ENCODE measurements at regions of chr2 and their contacts with region 1.

Region 1: GRCh38 chr2:231925303-231926179 is 655 bp downstream of the NPPC start:
- DNase-seq: peak; percentile 63 to 70 (median 70)
- H3K4me3 ChIP-seq: peak overlapping the region in 1 of 3 experiments; percentile 65
- H3K4me3 Mint-ChIP-seq: peak overlapping the region; percentile 59 to 82
- H3K27ac ChIP-seq: no peak overlapping the region
- H3K27ac Mint-ChIP-seq: no peak overlapping the region
- H3K4me1 ChIP-seq: peaks cover 16 to 24% of the 10 kb centered on the region in 2 donors
- H3K4me1 Mint-ChIP-seq: peaks cover 12% of the 10 kb centered on the region
- H3K27me3 ChIP-seq: peaks cover 28 to 70% of the 10 kb centered on the region in 2 donors
- H3K27me3 Mint-ChIP-seq: peaks cover 50 to 78% (median 60%) of the 10 kb centered on the region in 3 donors
- CTCF ChIP-seq: peak; percentile 89

Region 2: GRCh38 chr2:230619466-230619865 is 1306.1 kb before region 1 on chr2:
- intact Hi-C with region 1: no loop called
- DNase-seq: no peak
- H3K4me3 ChIP-seq: no peak overlapping the region
- H3K4me3 Mint-ChIP-seq: no peak overlapping the region
- H3K27ac ChIP-seq: no peak overlapping the region
- H3K27ac Mint-ChIP-seq: no peak overlapping the region
- H3K4me1 ChIP-seq: no peaks in the 10 kb centered on the region
- H3K4me1 Mint-ChIP-seq: peaks cover 5% of the 10 kb centered on the region
- H3K27me3 ChIP-seq: no peaks in the 10 kb centered on the region
- H3K27me3 Mint-ChIP-seq: peaks cover 0 to 4% (median 3%) of the 10 kb centered on the region in 3 donors
- CTCF ChIP-seq: no peak

Region 3: GRCh38 chr2:231961349-231962166 is 36.0 kb after region 1 on chr2 and contains the start of gene DIS3L2:
- intact Hi-C with region 1: no loop called
- DNase-seq: peak; percentile 59 to 66 (median 59)
- H3K4me3 ChIP-seq: peak within 1 kb of the TSS; percentile 87 to 95 (median 92)
- H3K4me3 Mint-ChIP-seq: peak within 1 kb of the TSS; percentile 92 to 94
- H3K27ac ChIP-seq: peak within 1 kb of the TSS; percentile 12 to 78
- H3K27ac Mint-ChIP-seq: peak within 1 kb of the TSS in 6 of 7 donors; percentile 79 to 91 (median 84)
- H3K4me1 ChIP-seq: peaks cover 11 to 16% of the 10 kb centered on the region in 2 donors
- H3K4me1 Mint-ChIP-seq: peaks cover 28% of the 10 kb centered on the region
- H3K27me3 ChIP-seq: no peaks in the 10 kb centered on the region
- H3K27me3 Mint-ChIP-seq: peaks cover 2 to 7% (median 5%) of the 10 kb centered on the region in 3 donors
- CTCF ChIP-seq: no peak
- polyA plus RNA-seq, gene DIS3L2: 6.0 to 21.7 (median 6.4) TPM

Region 4: GRCh38 chr2:232133078-232133477 is 207.5 kb after region 1 on chr2:
- intact Hi-C with region 1: loop called in 1 of 2 experiments (anchors 10 kb)
- DNase-seq: no peak
- H3K4me3 ChIP-seq: no peak overlapping the region
- H3K4me3 Mint-ChIP-seq: no peak overlapping the region
- H3K27ac ChIP-seq: no peak overlapping the region
- H3K27ac Mint-ChIP-seq: no peak overlapping the region
- H3K4me1 ChIP-seq: no peaks in the 10 kb centered on the region
- H3K4me1 Mint-ChIP-seq: peaks cover 3% of the 10 kb centered on the region
- H3K27me3 ChIP-seq: no peaks in the 10 kb centered on the region
- H3K27me3 Mint-ChIP-seq: no peaks in the 10 kb centered on the region
- CTCF ChIP-seq: no peak

Region 5: GRCh38 chr2:232142049-232142448 is 216.5 kb after region 1 on chr2:
- intact Hi-C with region 1: loop called (anchors 10 kb)
- DNase-seq: no peak
- H3K4me3 ChIP-seq: no peak overlapping the region
- H3K4me3 Mint-ChIP-seq: no peak overlapping the region
- H3K27ac ChIP-seq: no peak overlapping the region
- H3K27ac Mint-ChIP-seq: no peak overlapping the region
- H3K4me1 ChIP-seq: no peaks in the 10 kb centered on the region
- H3K4me1 Mint-ChIP-seq: peaks cover 5% of the 10 kb centered on the region
- H3K27me3 ChIP-seq: no peaks in the 10 kb centered on the region
- H3K27me3 Mint-ChIP-seq: no peaks in the 10 kb centered on the region
- CTCF ChIP-seq: peak; percentile 36

Measured in CD14-positive monocyte (primary cell).